ENCODE measurements at regions of chr19 and their contacts with region 1.

Region 1: GRCh38 chr19:2070436-2070827 is 19.4 kb upstream of the MKNK2 start:
- DNase-seq: peak in 4 of 5 donors; percentile 66 to 73 (median 68)
- H3K4me3 ChIP-seq: no peak overlapping the region
- H3K27ac ChIP-seq: peak overlapping the region in 1 of 2 donors; percentile 49
- H3K4me1 ChIP-seq: peaks cover 6% of the 10 kb centered on the region
- H3K27me3 ChIP-seq: no peaks in the 10 kb centered on the region
- CTCF ChIP-seq: no peak
- EP300 ChIP-seq: no peak
- POLR2A ChIP-seq: no peak

Region 2: DNA sequence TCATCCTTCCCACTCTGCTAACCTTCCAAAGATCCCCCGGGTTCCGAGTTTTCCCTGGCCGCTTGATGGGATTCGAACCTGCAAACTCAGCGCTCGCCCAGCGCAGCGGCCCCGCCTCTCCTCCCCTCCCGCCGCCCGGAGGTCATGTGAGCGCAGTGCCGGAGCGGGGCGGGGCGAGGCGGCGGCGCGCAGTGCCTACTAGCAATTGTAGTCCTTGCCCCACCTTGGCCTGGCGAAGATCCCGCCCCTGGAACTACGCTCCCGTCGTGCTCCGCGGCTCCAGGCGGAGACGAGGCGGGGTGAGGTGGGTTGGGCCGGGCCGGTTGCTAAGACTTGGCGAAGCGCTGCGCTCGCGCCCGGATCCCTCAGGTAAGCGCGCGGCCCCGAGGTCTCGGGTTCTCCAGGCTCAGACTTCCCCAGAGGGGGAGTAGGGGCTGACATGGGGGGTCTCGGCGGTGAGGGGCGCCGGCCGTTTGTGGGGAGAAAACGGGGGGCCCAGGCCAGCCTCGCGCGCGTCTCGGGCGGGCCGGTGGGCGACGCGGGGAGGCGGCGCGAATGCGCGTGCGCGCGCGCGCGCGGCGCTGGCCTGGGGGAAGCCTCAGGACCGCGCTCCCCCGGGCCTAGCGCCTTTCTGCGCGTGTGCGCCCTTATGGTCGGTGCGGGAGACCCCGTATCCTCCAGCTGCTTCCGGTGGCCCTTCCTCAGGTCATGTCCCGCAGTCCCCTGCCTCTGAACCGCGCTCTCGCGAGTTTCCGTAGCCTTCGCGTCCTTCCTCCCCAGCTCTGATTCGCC is 165.2 kb before region 1 on chr19 and contains the starts of genes ADAT3 and SCAMP4:
- intact Hi-C with region 1: no loop called
- DNase-seq: peak; percentile 99 to 100 (median 100)
- H3K4me3 ChIP-seq: peak within 1 kb of the TSS; percentile 70
- H3K27ac ChIP-seq: peak within 1 kb of the TSS; percentile 87 to 95
- H3K4me1 ChIP-seq: peaks cover 19% of the 10 kb centered on the region
- H3K27me3 ChIP-seq: no peaks in the 10 kb centered on the region
- CTCF ChIP-seq: no peak
- EP300 ChIP-seq: no peak
- POLR2A ChIP-seq: peak; percentile 82
- total RNA-seq, gene ADAT3: 2.6 to 13.7 (median 4.6) TPM
- total RNA-seq, gene SCAMP4: 32.0 to 87.0 (median 62.6) TPM

Region 3: GRCh38 chr19:1929021-1929742 is 141.2 kb before region 1 on chr19:
- intact Hi-C with region 1: loop called in 3 of 4 experiments (anchors 5 to 10 kb)
- DNase-seq: peak; percentile 63 to 85 (median 79)
- H3K4me3 ChIP-seq: peak overlapping the region; percentile 12
- H3K27ac ChIP-seq: no peak overlapping the region
- H3K4me1 ChIP-seq: peaks cover 11% of the 10 kb centered on the region
- H3K27me3 ChIP-seq: no peaks in the 10 kb centered on the region
- CTCF ChIP-seq: peak; percentile 78 to 85 (median 83)
- EP300 ChIP-seq: no peak
- POLR2A ChIP-seq: no peak

Region 4: DNA sequence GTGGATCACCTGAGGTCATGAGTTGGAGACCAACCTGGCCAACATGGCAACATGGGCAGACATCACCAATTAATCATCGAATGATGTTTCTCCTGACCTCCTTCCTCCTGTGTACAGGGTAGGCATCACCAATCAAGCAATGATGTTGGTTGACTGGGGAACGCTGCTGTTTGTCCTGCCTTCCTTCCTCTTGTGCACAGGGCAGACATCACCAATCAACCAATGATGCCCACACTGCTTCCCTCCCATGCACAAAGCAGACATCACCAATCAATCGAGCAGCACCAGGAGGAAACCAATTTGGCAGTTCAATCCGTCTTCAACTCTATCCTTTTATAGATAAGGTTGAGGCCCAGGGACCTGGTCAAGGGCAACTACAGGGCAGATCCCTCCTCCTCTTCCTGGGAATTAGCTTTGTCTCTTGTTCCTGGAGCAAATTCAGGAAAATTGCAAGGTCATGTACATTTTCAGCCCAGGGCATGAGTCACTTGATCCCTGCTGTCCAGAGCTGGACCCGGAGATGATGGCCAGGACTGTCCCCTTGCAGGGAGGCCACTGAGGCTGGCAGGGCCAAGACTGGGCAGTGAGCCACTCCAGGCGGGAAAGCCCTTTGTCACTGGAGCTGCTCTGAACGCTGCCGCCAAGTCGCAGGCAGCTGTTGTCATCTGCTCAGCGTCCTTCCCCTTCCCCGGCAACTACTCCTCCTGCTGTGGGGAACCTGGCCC is 134.8 kb before region 1 on chr19:
- intact Hi-C with region 1: loop called in 2 of 4 experiments (anchors 10 kb)
- DNase-seq: no peak
- H3K4me3 ChIP-seq: no peak overlapping the region
- H3K27ac ChIP-seq: no peak overlapping the region
- H3K4me1 ChIP-seq: peaks cover 6% of the 10 kb centered on the region
- H3K27me3 ChIP-seq: no peaks in the 10 kb centered on the region
- CTCF ChIP-seq: no peak
- EP300 ChIP-seq: no peak
- POLR2A ChIP-seq: no peak

Region 5: GRCh38 chr19:2021453-2022140 is 48.8 kb before region 1 on chr19:
- intact Hi-C with region 1: loop called in 3 of 4 experiments (anchors 2 to 5 kb)
- DNase-seq: no peak
- H3K4me3 ChIP-seq: no peak overlapping the region
- H3K27ac ChIP-seq: no peak overlapping the region
- H3K4me1 ChIP-seq: no peaks in the 10 kb centered on the region
- H3K27me3 ChIP-seq: no peaks in the 10 kb centered on the region
- CTCF ChIP-seq: no peak
- EP300 ChIP-seq: no peak
- POLR2A ChIP-seq: no peak

Measured in ovary (tissue), 10 donors.